Activated CD4-positive, alpha-beta T cell treated with anti-CD3 and anti-CD28 coated beads, Interleukin-2, amount 10 ng/mL, durations not matched to agents 24 days and 14 days (primary cell): ENCODE measurements at regions of chr7 and their contacts with region 1.

Region 1: GRCh38 chr7:106346678-106347217 is 62.0 kb upstream of the NAMPT start:
- DNase-seq: peak; percentile 93
- H3K4me3 Mint-ChIP-seq: peak overlapping the region; percentile 72
- H3K27ac Mint-ChIP-seq: peak overlapping the region; percentile 99
- H3K4me1 Mint-ChIP-seq: peaks cover 48% of the 10 kb centered on the region
- H3K27me3 Mint-ChIP-seq: no peaks in the 10 kb centered on the region

Region 2: DNA sequence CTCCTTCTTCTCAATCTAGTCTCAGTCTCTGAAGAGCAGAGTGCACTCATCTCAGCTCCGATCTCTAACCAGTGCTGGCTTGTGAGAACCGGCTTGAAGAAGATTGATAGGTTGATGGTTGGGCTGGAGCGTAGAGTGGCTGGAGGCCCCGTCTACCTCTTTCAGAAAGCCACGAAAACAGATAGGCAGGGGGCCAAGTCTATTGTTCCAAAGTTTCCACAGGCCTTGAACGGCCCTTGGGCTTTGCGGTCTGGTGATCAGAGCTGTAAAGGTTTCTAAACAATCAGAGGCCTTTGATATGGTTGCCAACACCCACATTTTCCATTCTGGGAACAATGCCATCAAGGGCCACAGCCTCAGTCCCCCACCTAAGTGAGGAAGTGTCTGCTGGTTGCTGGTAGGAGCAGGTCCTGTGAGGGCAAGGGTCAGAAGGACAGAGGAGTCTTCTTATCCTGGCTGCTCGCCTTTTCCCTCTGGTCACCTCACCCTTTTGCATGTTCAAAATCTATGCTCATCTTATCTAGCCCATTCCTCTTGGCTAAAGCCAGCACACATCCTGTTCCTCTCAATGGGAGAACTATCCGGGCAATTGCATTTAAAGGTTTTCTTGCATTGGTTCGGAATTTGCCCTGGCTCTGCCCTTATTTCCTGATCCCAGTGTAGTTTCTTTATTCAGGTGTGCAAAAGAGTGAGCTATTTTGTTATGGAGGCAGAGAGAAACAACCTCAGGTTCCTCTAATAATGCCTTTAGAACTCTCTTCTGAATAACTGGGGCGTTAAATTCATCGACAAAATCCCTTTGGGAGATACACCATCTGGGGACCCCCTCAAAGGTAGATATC is 1403.0 kb before region 1 on chr7:
- intact Hi-C with region 1: loop called (anchors 5 kb)
- DNase-seq: peak; percentile 93
- H3K4me3 Mint-ChIP-seq: peak overlapping the region; percentile 97
- H3K27ac Mint-ChIP-seq: peak overlapping the region; percentile 100
- H3K4me1 Mint-ChIP-seq: peaks cover 56% of the 10 kb centered on the region
- H3K27me3 Mint-ChIP-seq: peaks cover 3% of the 10 kb centered on the region

Region 3: GRCh38 chr7:106239404-106239803 is 107.3 kb before region 1 on chr7:
- intact Hi-C with region 1: no loop called
- DNase-seq: peak; percentile 37
- H3K4me3 Mint-ChIP-seq: no peak overlapping the region
- H3K27ac Mint-ChIP-seq: no peak overlapping the region
- H3K4me1 Mint-ChIP-seq: no peaks in the 10 kb centered on the region
- H3K27me3 Mint-ChIP-seq: peaks cover 3% of the 10 kb centered on the region

Region 4: GRCh38 chr7:106309362-106309761 is 37.4 kb before region 1 on chr7:
- intact Hi-C with region 1: no loop called
- DNase-seq: no peak
- H3K4me3 Mint-ChIP-seq: no peak overlapping the region
- H3K27ac Mint-ChIP-seq: no peak overlapping the region
- H3K4me1 Mint-ChIP-seq: peaks cover 16% of the 10 kb centered on the region
- H3K27me3 Mint-ChIP-seq: no peaks in the 10 kb centered on the region

Region 5: GRCh38 chr7:106329971-106330733 is 16.6 kb before region 1 on chr7:
- intact Hi-C with region 1: loop called (anchors 1 kb)
- DNase-seq: no peak
- H3K4me3 Mint-ChIP-seq: peak overlapping the region; percentile 5
- H3K27ac Mint-ChIP-seq: peak overlapping the region; percentile 74
- H3K4me1 Mint-ChIP-seq: peaks cover 13% of the 10 kb centered on the region
- H3K27me3 Mint-ChIP-seq: peaks cover 6% of the 10 kb centered on the region

Region 6: DNA sequence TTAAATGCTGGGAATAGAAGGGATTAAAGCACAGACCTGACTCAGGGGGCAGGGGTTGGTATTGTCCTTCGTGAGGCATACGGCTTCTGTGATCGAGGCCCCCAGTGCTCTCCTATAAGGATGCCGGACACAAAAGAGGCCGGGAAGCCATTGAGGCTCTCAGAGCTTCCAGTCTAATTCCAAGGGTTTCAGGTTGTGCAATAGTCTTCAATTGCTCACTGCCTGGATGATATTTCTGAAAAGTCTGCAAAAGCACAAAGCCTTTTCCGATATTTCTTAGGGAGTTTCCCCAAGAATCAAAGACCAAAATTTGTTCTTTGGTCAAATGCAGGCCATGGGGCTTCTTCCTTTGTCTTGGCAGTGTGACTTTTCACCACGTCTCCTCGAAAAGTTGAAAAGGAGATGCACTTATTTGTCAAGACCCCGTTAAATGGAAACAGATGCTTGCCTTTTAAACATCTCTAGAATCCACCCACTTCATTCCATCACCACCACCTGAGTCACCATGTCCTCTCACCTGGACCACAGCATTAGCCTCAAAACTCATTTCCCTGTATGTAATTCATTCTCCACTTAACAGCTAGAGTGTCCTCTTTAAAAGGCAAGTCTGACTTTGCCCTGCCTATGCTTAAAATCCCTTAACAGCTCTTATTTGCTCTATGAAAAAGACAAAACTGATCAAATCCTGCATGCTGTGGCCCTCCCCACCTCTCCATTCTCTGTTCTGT is 72.9 kb after region 1 on chr7:
- intact Hi-C with region 1: loop called (anchors 1 kb)
- DNase-seq: no peak
- H3K4me3 Mint-ChIP-seq: no peak overlapping the region
- H3K27ac Mint-ChIP-seq: peak overlapping the region; percentile 31
- H3K4me1 Mint-ChIP-seq: peaks cover 66% of the 10 kb centered on the region
- H3K27me3 Mint-ChIP-seq: no peaks in the 10 kb centered on the region

Region 7: GRCh38 chr7:106485031-106485551 is 138.3 kb after region 1 on chr7:
- intact Hi-C with region 1: loop called (anchors 1 kb)
- DNase-seq: peak; percentile 55
- H3K4me3 Mint-ChIP-seq: peak overlapping the region; percentile 11
- H3K27ac Mint-ChIP-seq: peak overlapping the region; percentile 82
- H3K4me1 Mint-ChIP-seq: peaks cover 43% of the 10 kb centered on the region
- H3K27me3 Mint-ChIP-seq: no peaks in the 10 kb centered on the region

Region 8: GRCh38 chr7:106774768-106775551 is 428.2 kb after region 1 on chr7:
- intact Hi-C with region 1: loop called (anchors 1 kb)
- DNase-seq: no peak
- H3K4me3 Mint-ChIP-seq: no peak overlapping the region
- H3K27ac Mint-ChIP-seq: peak overlapping the region; percentile 45
- H3K4me1 Mint-ChIP-seq: peaks cover 28% of the 10 kb centered on the region
- H3K27me3 Mint-ChIP-seq: no peaks in the 10 kb centered on the region